ENCODE measurements at regions of chr4 and their contacts with region 1.

Region 1: GRCh38 chr4:184514121-184514988 is 40.0 kb upstream of the IRF2 start:
- DNase-seq: peak; percentile 89
- ATAC-seq: peak; percentile 91
- H3K4me3 Mint-ChIP-seq: peak overlapping the region; percentile 51
- H3K27ac Mint-ChIP-seq: peak overlapping the region; percentile 90
- H3K4me1 Mint-ChIP-seq: peaks cover 43% of the 10 kb centered on the region
- H3K27me3 Mint-ChIP-seq: peaks cover 1% of the 10 kb centered on the region

Region 2: GRCh38 chr4:184287697-184288255 is 226.6 kb before region 1 on chr4:
- CTCF ChIA-PET with region 1: interaction called, 6 read pairs
- POLR2A ChIA-PET with region 1: interaction called, 9 read pairs
- intact Hi-C with region 1: loop called (anchors 1 kb)
- DNase-seq: no peak
- ATAC-seq: no peak
- H3K4me3 Mint-ChIP-seq: no peak overlapping the region
- H3K27ac Mint-ChIP-seq: peak overlapping the region; percentile 40
- H3K4me1 Mint-ChIP-seq: peaks cover 56% of the 10 kb centered on the region
- H3K27me3 Mint-ChIP-seq: peaks cover 4% of the 10 kb centered on the region

Region 3: DNA sequence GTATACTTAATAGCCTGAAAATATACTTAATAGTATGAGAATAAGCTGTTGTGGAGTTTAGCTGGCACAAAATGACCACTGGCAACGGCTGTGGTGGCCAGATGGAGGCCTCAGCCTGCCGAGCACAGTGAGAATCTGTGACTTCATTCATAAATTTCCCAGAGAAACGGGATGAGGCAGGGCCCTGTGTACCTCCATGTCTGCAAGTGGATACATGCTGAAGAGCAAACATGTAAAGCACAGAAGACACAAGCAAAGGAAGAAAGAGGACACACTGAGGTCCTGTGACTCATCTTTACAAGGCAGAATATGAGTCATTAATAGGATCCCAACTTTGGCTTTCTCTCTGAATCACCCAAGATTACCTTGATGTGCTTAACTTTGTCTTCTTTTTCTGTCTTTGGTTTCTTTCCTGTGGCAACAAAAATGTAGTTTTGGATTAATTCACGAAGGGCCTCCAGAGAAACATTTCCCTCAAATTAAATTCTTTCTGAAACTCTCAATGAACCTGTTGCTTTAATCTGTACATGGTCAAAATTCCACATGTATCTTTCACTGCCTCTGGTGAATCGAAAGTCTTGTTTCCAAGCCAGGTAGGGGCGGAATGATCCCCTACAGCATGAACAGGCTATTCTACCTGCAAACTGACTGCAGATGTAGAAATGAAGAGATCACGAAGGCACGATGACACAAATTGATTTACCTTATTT is 96.4 kb before region 1 on chr4:
- CTCF ChIA-PET with region 1: interaction called, 7 read pairs
- POLR2A ChIA-PET with region 1: interaction called, 4 read pairs
- intact Hi-C with region 1: loop called in 1 of 2 experiments (anchors 1 kb)
- DNase-seq: peak; percentile 22
- ATAC-seq: peak; percentile 73
- H3K4me3 Mint-ChIP-seq: no peak overlapping the region
- H3K27ac Mint-ChIP-seq: peak overlapping the region; percentile 64
- H3K4me1 Mint-ChIP-seq: peaks cover 90% of the 10 kb centered on the region
- H3K27me3 Mint-ChIP-seq: no peaks in the 10 kb centered on the region

Region 4: DNA sequence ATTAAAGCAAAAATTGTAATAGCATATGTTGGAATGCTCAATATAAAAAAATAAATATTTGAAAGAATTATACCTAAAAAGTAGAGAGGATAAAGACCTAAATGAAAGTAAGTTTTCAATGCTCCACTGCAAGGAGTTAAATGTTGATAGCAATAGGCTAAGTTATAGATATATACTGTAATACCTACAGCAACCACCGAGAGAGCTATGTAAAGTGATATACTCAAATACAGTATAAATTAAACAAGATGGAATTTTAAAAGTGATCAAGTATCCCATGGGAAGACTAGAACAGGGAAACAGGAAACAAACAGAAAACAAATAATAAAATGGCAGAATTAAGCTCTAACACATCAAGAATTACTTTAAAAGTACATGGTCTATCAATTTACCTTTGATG is 61.0 kb after region 1 on chr4:
- CTCF ChIA-PET with region 1: interaction called, 6 read pairs
- POLR2A ChIA-PET with region 1: interaction called, 3 read pairs
- intact Hi-C with region 1: loop called (anchors 1 to 2 kb)
- DNase-seq: no peak
- ATAC-seq: peak; percentile 67
- H3K4me3 Mint-ChIP-seq: no peak overlapping the region
- H3K27ac Mint-ChIP-seq: peak overlapping the region; percentile 47
- H3K4me1 Mint-ChIP-seq: peaks cover 22% of the 10 kb centered on the region
- H3K27me3 Mint-ChIP-seq: no peaks in the 10 kb centered on the region

Region 5: GRCh38 chr4:184968784-184969201 is 454.4 kb after region 1 on chr4:
- CTCF ChIA-PET with region 1: no interaction called
- POLR2A ChIA-PET with region 1: no interaction called
- intact Hi-C with region 1: loop called in 1 of 2 experiments (anchors 10 kb)
- DNase-seq: peak; percentile 20
- ATAC-seq: no peak
- H3K4me3 Mint-ChIP-seq: no peak overlapping the region
- H3K27ac Mint-ChIP-seq: no peak overlapping the region
- H3K4me1 Mint-ChIP-seq: peaks cover 6% of the 10 kb centered on the region
- H3K27me3 Mint-ChIP-seq: peaks cover 4% of the 10 kb centered on the region

Measured in activated CD4-positive, alpha-beta T cell treated with anti-CD3 and anti-CD28 coated beads for 36 hours (primary cell).